ENCODE measurements at regions of chr6 and their contacts with region 1.

Region 1: DNA sequence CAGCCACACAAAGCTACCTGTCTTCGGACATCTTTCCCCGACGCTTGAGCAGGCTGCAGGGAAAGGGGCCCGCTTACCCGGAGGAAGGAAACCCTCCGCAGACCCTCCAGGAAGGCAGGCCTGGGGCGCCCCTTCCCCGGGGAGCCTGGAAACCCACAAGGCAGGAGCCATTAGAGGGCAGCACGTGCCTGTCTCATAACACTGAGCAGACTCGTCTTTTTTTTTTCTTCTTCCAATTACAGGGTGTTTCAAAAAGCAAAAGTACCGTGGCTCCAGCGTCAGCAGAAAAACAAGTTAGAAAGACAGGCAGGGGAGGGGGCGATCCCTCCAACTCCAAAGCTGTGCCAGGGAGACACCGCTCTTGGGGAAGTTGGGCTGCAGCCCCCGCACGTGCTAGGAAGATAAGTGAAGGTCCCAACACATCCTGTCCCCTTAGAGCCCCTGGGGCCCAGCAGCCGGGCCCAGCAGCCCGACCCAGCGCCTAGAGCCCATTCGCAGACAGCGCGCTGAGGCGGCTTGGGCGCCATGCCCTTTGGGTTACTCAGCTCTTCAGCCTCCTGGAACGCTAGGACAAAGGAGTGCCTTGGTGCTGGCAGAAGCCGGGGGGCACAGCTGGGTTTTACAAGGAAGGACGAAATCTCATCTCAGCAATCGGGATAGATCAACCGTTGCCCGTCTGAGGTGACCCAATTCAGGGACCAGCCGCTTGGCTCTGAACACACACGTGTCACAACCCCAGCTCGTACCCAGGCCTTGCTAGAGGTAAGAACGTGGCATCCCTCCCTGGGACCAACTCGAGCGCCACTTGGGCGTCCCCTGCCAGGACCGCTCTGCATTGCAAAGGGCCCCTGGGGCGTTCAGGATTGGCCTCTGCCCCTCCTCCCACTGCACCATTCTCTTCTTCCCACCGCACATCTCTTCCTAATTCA is 136.3 kb downstream of the LY86 start:
- DNase-seq: peak; percentile 81 to 90 (median 89)
- H3K4me3 ChIP-seq: peak overlapping the region in 6 of 7 experiments; percentile 20 to 62 (median 40)
- H3K27ac ChIP-seq: peak overlapping the region; percentile 13 to 59
- H3K4me1 ChIP-seq: peaks cover 16 to 79% (median 52%) of the 10 kb centered on the region in 4 experiments
- H3K27me3 ChIP-seq: no peaks in the 10 kb centered on the region

Region 2: GRCh38 chr6:6305575-6305974 is 419.2 kb before region 1 on chr6:
- CTCF ChIA-PET with region 1: no interaction called
- POLR2A ChIA-PET with region 1: no interaction called
- DNase-seq: no peak
- H3K4me3 ChIP-seq: no peak overlapping the region
- H3K27ac ChIP-seq: no peak overlapping the region
- H3K4me1 ChIP-seq: no peaks in the 10 kb centered on the region
- H3K27me3 ChIP-seq: peaks cover 0 to 6% (median 0%) of the 10 kb centered on the region in 5 experiments

Region 3: DNA sequence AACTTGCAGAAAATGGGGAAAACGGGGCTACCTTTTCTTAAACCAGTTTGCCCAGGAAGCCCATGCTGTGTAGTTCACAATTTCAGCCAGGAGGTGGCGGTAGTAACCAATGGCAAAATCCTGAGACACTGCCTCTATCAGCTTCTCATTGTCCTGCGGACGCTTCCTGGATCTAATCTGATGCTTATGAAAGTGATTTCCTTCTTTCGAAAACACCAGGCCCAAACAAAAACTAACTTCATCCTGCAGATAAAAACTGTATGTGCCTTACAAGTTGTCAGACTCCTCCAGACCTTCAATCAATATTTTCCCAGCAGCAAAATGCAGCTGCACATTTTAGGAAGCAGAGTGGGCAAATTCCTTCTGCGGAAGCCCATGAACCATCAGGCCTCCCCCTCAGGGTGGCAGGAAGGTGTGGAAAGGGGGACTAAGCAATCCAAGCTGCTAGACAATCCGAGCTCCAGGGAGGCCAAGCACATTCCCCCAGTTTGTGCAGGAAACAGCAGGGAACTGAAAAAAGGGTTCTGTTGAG is 47.8 kb before region 1 on chr6:
- CTCF ChIA-PET with region 1: interaction called, 27 read pairs
- POLR2A ChIA-PET with region 1: no interaction called
- DNase-seq: peak; percentile 82 to 88 (median 85)
- H3K4me3 ChIP-seq: peak overlapping the region in 1 of 7 experiments; percentile 56
- H3K27ac ChIP-seq: no peak overlapping the region
- H3K4me1 ChIP-seq: peaks cover 4 to 55% (median 30%) of the 10 kb centered on the region in 4 experiments
- H3K27me3 ChIP-seq: no peaks in the 10 kb centered on the region

Region 4: GRCh38 chr6:6712258-6712999 is 12.4 kb before region 1 on chr6:
- CTCF ChIA-PET with region 1: interaction called, 56 read pairs
- POLR2A ChIA-PET with region 1: interaction called, 5 read pairs
- DNase-seq: peak; percentile 78 to 91 (median 89)
- H3K4me3 ChIP-seq: peak overlapping the region in 5 of 7 experiments; percentile 4 to 60 (median 41)
- H3K27ac ChIP-seq: peak overlapping the region; percentile 67 to 84
- H3K4me1 ChIP-seq: peaks cover 27 to 69% (median 48%) of the 10 kb centered on the region in 4 experiments
- H3K27me3 ChIP-seq: no peaks in the 10 kb centered on the region

Region 5: DNA sequence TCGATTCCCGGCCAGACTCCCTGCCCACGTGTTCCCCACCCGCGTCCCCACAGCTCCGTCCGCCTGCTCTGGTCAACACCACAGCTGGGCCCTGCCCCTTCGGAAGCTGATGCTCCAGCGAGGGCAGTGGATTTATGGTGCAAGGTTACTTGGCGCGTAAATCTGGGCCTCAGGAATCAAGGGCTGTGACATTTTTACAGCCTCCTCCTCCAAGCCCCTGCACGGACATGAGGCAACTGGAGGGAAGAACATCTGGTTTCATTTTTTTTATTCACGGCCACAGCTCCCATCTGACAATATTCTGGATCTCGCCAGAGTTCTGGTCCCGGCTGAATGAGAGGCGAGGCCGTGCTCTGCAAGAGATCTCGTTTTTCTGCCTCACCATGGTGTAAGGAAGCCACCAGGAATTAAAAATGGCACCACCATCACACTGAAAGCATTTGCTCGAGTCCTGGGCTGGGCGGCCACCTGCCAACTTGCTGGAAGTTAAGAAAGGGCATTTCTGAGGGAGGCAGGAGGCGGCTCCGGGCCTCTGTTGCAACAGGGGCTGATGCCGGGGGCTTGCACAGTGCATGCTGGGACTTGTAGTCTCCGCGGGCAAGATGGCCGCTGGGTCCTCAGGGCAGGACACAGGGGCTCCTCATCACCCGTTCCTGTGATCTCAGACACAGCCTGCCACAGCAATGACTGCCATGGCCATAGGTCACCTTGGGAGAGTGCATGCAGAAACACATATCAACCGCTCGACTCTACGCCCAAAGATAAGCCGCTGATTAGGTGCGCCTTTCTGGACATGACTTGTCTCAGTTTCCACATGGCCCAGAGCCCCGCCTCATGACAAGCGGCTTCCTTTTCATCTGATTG is 12.2 kb after region 1 on chr6:
- CTCF ChIA-PET with region 1: interaction called, 12 read pairs
- POLR2A ChIA-PET with region 1: no interaction called
- DNase-seq: peak in 2 of 3 donors; percentile 28 to 32
- H3K4me3 ChIP-seq: peak overlapping the region in 3 of 7 experiments; percentile 31 to 51 (median 44)
- H3K27ac ChIP-seq: no peak overlapping the region
- H3K4me1 ChIP-seq: peaks cover 0 to 5% (median 0%) of the 10 kb centered on the region in 4 experiments
- H3K27me3 ChIP-seq: no peaks in the 10 kb centered on the region

Measured in common myeloid progenitor, CD34-positive (primary cell).